Colonic mucosa (tissue), 4 donors: ENCODE measurements at regions of chr19 and their contacts with region 1.

Region 1: GRCh38 chr19:17703824-17704463 is 15.3 kb upstream of the MAP1S start:
- DNase-seq: peak; percentile 66
- H3K4me3 ChIP-seq: no peak overlapping the region
- H3K27ac ChIP-seq: no peak overlapping the region
- H3K4me1 ChIP-seq: no peaks in the 10 kb centered on the region
- H3K27me3 ChIP-seq: no peaks in the 10 kb centered on the region
- CTCF ChIP-seq: peak; percentile 87

Region 2: GRCh38 chr19:17475541-17476115 is 228.3 kb before region 1 on chr19:
- intact Hi-C with region 1: no loop called
- DNase-seq: no peak
- H3K4me3 ChIP-seq: no peak overlapping the region
- H3K27ac ChIP-seq: no peak overlapping the region
- H3K4me1 ChIP-seq: no peaks in the 10 kb centered on the region
- H3K27me3 ChIP-seq: no peaks in the 10 kb centered on the region
- CTCF ChIP-seq: no peak

Region 3: DNA sequence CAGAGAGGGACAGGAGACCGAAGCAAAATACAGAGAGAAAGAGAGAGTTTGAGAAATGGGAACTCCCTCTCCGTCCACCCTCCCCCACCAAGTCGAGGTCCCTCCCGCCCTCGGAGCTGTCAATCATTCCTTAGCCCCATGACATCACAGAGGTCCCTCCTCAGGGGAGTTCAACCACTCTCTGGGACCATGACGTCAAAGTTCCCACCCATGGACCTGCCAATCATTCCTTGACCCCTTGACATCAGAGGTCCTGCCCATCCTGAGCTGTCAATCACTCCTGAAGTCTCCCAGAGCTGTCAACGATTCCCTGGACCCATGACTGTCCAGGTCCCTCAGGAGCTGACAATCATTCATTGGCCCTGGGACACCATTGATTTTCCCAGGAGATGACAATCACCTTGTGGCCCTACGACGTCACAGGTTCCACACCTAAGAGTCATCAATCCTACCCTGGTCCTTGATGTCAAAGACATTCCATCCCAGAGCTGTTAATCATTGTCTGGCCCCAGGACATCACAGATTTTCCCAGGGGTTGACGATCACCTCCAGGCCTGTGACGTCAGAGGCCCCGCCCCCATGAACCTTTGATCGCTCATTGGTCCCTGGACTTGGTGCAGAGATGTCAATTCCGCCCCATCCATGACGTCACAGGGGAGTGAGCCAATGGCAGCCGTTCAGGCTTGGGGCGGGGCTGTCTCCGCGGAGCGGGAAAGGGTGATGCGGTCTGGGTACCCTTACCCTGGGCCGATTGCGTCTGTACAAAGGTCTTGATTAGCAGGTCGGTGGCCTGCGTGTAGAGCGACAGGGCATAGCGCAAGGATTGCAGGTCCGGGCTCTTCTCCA is 86.8 kb before region 1 on chr19:
- intact Hi-C with region 1: no loop called
- DNase-seq: no peak
- H3K4me3 ChIP-seq: no peak overlapping the region
- H3K27ac ChIP-seq: no peak overlapping the region
- H3K4me1 ChIP-seq: no peaks in the 10 kb centered on the region
- H3K27me3 ChIP-seq: no peaks in the 10 kb centered on the region
- CTCF ChIP-seq: no peak

Region 4: GRCh38 chr19:17766543-17767131 is 62.7 kb after region 1 on chr19:
- intact Hi-C with region 1: loop called (anchors 5 kb)
- DNase-seq: peak; percentile 96
- H3K4me3 ChIP-seq: peak overlapping the region; percentile 12
- H3K27ac ChIP-seq: peak overlapping the region; percentile 53
- H3K4me1 ChIP-seq: no peaks in the 10 kb centered on the region
- H3K27me3 ChIP-seq: no peaks in the 10 kb centered on the region
- CTCF ChIP-seq: peak; percentile 84

Region 5: GRCh38 chr19:17859533-17860330 is 155.8 kb after region 1 on chr19 and contains the start of gene RPL18A:
- intact Hi-C with region 1: loop called (anchors 10 kb)
- DNase-seq: peak; percentile 98
- H3K4me3 ChIP-seq: peak within 1 kb of the TSS; percentile 92
- H3K27ac ChIP-seq: peak within 1 kb of the TSS; percentile 75
- H3K4me1 ChIP-seq: peaks cover 4% of the 10 kb centered on the region
- H3K27me3 ChIP-seq: no peaks in the 10 kb centered on the region
- CTCF ChIP-seq: peak; percentile 74
- total RNA-seq, gene RPL18A: 1,592 to 1,923 TPM